Naive thymus-derived CD4-positive, alpha-beta T cell (primary cell): ENCODE measurements at regions of chr3 and their contacts with region 1.

Region 1: DNA sequence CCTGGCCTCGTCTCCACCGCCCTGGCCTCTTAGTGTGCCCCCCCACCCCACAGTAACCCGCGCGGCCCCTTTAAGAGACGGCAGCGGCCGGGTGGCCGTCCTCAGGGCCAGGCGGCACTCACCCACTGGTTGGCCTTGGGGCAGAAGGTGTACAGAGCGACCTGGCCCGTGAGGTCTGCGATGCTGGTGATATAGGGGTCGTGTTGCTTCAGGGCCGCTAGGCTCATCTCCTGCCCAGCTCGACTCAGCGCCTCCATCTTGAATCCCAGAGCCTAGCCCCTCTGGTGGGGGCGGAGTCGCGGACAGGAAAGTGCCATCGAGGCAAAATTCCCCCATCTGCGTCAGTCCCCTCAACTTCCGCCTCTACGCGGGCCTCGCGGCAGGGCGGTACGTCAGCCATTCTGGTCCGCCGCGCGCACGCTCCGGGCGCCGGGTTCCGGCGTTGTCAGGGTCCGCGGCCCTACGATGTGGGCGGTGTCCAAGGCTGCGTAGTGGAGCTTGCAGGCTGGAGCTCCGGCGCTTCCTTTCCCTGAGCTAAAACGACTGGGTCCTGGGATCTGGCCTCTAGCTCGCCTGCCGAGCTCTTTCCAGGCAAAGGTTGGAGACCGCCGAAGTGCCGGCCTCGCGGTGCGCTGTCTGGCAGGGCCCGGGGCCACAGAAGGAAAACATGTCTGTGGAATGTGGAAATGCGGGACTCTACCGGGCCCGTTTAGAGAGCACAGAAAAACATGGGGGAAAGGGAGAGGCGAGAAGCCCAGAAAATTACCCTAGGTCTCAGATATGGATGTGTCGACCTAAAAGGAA is at the start of gene DCP1A:
- DNase-seq: peak; percentile 93 to 98 (median 96)
- ATAC-seq: peak; percentile 96
- H3K4me3 ChIP-seq: peak within 1 kb of the TSS; percentile 93
- H3K4me3 Mint-ChIP-seq: peak within 1 kb of the TSS; percentile 96 to 99 (median 99)
- H3K27ac ChIP-seq: peak within 1 kb of the TSS; percentile 98
- H3K27ac Mint-ChIP-seq: peak within 1 kb of the TSS; percentile 98 to 100 (median 99)
- H3K4me1 ChIP-seq: peaks cover 6 to 21% of the 10 kb centered on the region in 2 donors
- H3K4me1 Mint-ChIP-seq: peaks cover 13 to 58% (median 42%) of the 10 kb centered on the region in 7 donors
- H3K27me3 ChIP-seq: no peaks in the 10 kb centered on the region
- H3K27me3 Mint-ChIP-seq: no peaks in the 10 kb centered on the region
- total RNA-seq, gene DCP1A: 34.0 to 51.3 (median 40.1) TPM

Region 2: DNA sequence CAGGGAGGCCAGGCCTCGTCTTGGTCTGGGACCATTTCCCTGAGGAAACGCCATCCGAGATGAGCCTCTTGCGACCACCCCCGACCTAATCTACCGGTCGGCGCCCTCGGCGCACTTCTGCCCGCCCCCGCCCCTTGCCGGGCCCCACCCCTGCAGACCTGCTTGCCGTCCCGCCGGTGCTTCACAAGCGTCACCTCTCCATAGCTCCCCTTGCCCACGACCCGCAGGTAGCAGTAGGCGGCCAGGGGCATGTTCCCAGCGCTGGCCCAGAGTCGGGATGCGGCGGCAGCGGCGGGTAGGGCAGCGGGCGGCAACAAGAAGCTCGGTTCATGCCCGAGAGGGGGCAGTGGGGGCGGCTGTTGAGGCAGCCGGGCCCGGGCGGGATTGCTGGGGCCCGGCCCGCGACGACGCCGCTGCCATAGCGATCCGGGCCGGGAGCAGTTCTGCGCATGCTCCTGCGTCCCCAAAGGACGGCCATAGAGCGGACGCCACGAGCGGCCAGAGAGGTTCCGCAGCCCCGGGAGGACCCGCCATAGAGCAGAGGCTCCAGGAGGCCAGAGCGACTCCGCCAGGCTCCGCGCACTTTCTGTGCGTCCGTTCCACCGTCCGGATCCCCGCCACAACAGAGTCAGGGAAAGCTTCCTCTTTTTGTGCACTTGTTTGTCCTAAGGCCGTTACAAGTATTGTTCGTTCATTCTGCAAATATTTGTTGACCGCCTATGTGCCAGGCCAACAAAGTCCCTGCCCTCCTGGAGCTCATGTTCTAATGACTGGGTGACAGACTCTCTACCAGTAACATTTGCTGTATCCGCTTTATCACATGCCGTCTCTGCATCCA is 576.7 kb before region 1 on chr3 and contains the start of gene NEK4:
- CTCF ChIA-PET with region 1: no interaction called
- POLR2A ChIA-PET with region 1: no interaction called
- intact Hi-C with region 1: loop called in 1 of 2 experiments (anchors 2 kb)
- DNase-seq: peak; percentile 44 to 86 (median 65)
- ATAC-seq: peak; percentile 89
- H3K4me3 ChIP-seq: peak within 1 kb of the TSS; percentile 83
- H3K4me3 Mint-ChIP-seq: peak within 1 kb of the TSS; percentile 83 to 99 (median 95)
- H3K27ac ChIP-seq: peak within 1 kb of the TSS; percentile 72
- H3K27ac Mint-ChIP-seq: peak within 1 kb of the TSS; percentile 89 to 97 (median 93)
- H3K4me1 ChIP-seq: peaks cover 5 to 16% of the 10 kb centered on the region in 2 donors
- H3K4me1 Mint-ChIP-seq: peaks cover 12 to 34% (median 23%) of the 10 kb centered on the region in 7 donors
- H3K27me3 ChIP-seq: no peaks in the 10 kb centered on the region
- H3K27me3 Mint-ChIP-seq: peaks cover 0 to 12% (median 0%) of the 10 kb centered on the region in 5 donors
- total RNA-seq, gene NEK4: 14.4 to 28.4 (median 21.1) TPM

Region 3: GRCh38 chr3:52897130-52898122 is 450.0 kb before region 1 on chr3 and contains the start of gene STIMATE:
- CTCF ChIA-PET with region 1: no interaction called
- POLR2A ChIA-PET with region 1: no interaction called
- intact Hi-C with region 1: loop called in 1 of 2 experiments (anchors 1 kb)
- DNase-seq: peak; percentile 77 to 89 (median 86)
- ATAC-seq: peak; percentile 97
- H3K4me3 ChIP-seq: peak within 1 kb of the TSS; percentile 85
- H3K4me3 Mint-ChIP-seq: peak within 1 kb of the TSS; percentile 90 to 99 (median 95)
- H3K27ac ChIP-seq: peak within 1 kb of the TSS; percentile 72
- H3K27ac Mint-ChIP-seq: peak within 1 kb of the TSS; percentile 44 to 97 (median 86)
- H3K4me1 ChIP-seq: peaks cover 16 to 23% of the 10 kb centered on the region in 2 donors
- H3K4me1 Mint-ChIP-seq: peaks cover 37 to 51% (median 45%) of the 10 kb centered on the region in 7 donors
- H3K27me3 ChIP-seq: no peaks in the 10 kb centered on the region
- H3K27me3 Mint-ChIP-seq: no peaks in the 10 kb centered on the region
- total RNA-seq, gene STIMATE: 21.1 to 44.9 (median 34.5) TPM

Region 4: DNA sequence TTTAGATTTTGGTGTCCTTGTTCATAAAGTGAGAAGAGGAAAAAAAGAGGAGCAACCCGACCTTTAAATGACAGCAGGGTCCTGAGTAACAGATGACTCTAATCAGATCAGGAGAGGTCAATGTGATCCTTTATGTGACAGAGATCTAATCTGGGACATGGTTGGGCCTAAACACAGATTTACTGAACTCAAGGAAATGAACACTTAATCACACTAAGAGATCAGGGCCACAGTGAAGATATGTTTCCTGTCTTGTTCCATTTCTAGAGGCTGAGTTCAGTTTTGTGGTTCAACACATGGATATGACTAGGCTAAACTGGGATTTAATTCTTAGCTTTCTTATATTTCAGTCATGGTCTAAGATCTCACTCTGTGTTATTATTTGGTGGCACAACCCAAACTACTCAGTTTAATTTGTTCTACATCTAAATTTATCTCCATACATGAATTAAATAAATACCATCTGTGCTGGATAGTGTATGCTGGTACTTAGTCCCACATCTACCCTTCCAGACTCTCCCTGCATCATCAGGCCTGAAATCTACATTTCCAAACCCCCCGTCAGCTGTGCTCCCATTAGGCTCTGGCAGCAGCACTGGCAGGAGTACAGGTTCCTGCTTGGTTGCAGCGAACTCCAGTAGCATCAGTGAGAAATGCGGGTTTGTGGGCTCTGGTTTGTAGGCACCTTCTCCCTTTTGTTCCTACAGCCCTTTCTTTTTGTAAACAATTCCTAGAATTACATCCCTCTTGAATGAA is 324.2 kb before region 1 on chr3:
- CTCF ChIA-PET with region 1: no interaction called
- POLR2A ChIA-PET with region 1: no interaction called
- intact Hi-C with region 1: no loop called
- DNase-seq: no peak
- ATAC-seq: no peak
- H3K4me3 ChIP-seq: no peak overlapping the region
- H3K4me3 Mint-ChIP-seq: peak overlapping the region in 7 of 10 donors; percentile 1 to 58 (median 21)
- H3K27ac ChIP-seq: no peak overlapping the region
- H3K27ac Mint-ChIP-seq: peak overlapping the region in 5 of 9 donors; percentile 32 to 83 (median 51)
- H3K4me1 ChIP-seq: peaks cover 11 to 20% of the 10 kb centered on the region in 2 donors
- H3K4me1 Mint-ChIP-seq: peaks cover 21 to 82% (median 69%) of the 10 kb centered on the region in 7 donors
- H3K27me3 ChIP-seq: no peaks in the 10 kb centered on the region
- H3K27me3 Mint-ChIP-seq: no peaks in the 10 kb centered on the region

Region 5: DNA sequence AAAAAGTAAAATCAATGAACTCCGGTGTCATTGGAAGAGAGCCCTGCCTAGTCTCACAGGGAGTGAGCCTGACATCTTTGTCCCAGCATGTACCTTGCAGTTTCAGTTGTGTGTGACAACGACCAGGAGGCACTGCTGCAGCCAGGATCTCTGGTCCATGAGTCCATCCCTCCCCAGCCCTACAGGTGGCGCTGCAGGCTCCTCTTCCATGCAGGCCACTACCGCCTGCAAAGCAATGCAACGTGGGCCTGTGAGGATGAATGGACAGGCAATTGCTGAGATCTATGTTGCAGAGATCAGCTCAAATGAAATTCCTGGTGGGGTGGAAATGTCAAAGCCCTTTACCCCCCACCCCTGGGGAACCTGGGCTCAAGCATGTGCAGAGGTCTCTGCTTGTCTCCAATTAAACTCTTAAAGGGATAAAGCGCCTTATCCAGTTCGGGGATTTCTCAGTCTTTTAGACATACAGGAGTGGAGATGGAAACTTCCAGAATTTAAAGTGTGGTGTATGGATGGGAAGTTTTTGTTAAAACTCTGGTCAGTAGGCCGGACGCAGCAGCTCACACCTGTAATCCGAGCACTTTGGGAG is 127.5 kb before region 1 on chr3:
- CTCF ChIA-PET with region 1: no interaction called
- POLR2A ChIA-PET with region 1: no interaction called
- intact Hi-C with region 1: loop called (anchors 1 kb)
- DNase-seq: peak; percentile 39 to 83 (median 66)
- ATAC-seq: peak; percentile 91
- H3K4me3 ChIP-seq: no peak overlapping the region
- H3K4me3 Mint-ChIP-seq: no peak overlapping the region
- H3K27ac ChIP-seq: no peak overlapping the region
- H3K27ac Mint-ChIP-seq: peak overlapping the region in 3 of 9 donors; percentile 7 to 19 (median 13)
- H3K4me1 ChIP-seq: no peaks in the 10 kb centered on the region
- H3K4me1 Mint-ChIP-seq: peaks cover 0 to 5% (median 3%) of the 10 kb centered on the region in 7 donors
- H3K27me3 ChIP-seq: no peaks in the 10 kb centered on the region
- H3K27me3 Mint-ChIP-seq: peaks cover 0 to 5% (median 0%) of the 10 kb centered on the region in 5 donors

Region 6: DNA sequence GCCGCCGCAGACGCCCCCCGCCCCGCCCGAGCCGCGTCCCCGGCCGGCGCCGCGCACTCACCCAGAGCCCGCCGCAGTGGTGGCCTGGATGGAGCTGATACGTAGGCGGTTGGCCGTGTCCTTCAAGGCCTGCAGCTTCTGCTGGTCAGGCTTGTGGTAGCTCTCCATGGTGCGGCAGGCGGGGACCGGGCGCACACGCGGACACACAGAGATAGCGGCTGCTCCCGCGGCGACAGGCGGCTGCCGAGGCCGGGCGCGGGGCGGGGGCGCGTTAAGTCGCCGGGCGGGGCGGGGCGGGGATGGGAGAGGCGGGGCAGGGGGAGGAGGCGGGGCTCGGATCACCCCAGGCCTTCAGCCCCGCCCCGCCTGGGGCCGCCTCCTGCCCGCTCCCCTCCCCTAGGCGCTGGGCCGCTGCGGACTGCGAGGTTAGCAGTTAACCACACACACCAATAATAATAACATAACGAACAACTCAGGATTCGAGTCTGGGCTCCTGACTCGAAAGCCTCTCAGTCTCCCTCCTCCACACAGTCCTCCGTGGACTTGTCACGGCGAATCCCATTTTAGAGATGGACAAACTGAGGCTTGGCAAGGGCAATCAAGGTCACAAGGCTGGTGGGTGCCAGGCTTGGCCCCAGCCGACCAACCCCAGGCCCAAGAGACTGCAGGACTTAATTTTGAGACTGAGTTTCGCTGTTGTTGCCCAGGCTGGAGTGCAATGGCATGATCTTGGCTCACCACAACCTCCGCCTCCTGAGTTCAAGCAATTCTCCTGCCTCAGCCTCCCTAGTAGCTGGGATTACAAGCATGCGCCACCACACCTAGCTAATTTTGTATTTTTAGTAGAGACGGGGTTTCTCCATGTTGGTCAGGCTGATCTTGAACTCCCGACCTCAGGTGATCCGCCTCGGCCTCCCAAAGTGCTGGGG is 91.4 kb before region 1 on chr3 and contains the start of gene TKT:
- CTCF ChIA-PET with region 1: no interaction called
- POLR2A ChIA-PET with region 1: interaction called, 7 read pairs
- intact Hi-C with region 1: loop called (anchors 1 kb)
- DNase-seq: peak; percentile 58 to 85 (median 67)
- ATAC-seq: peak; percentile 92
- H3K4me3 ChIP-seq: peak within 1 kb of the TSS; percentile 70
- H3K4me3 Mint-ChIP-seq: peak within 1 kb of the TSS; percentile 90 to 97 (median 92)
- H3K27ac ChIP-seq: peak within 1 kb of the TSS; percentile 76
- H3K27ac Mint-ChIP-seq: peak within 1 kb of the TSS; percentile 69 to 89 (median 84)
- H3K4me1 ChIP-seq: peaks cover 14% of the 10 kb centered on the region in 2 donors
- H3K4me1 Mint-ChIP-seq: peaks cover 19 to 39% (median 34%) of the 10 kb centered on the region in 7 donors
- H3K27me3 ChIP-seq: no peaks in the 10 kb centered on the region
- H3K27me3 Mint-ChIP-seq: peaks cover 0 to 4% (median 0%) of the 10 kb centered on the region in 5 donors
- total RNA-seq, gene TKT: 83.5 to 333 (median 121) TPM

Region 7: GRCh38 chr3:53303957-53304356 is 43.5 kb before region 1 on chr3:
- CTCF ChIA-PET with region 1: interaction called, 3 read pairs
- POLR2A ChIA-PET with region 1: interaction called, 3 read pairs
- intact Hi-C with region 1: loop called (anchors 1 kb)
- DNase-seq: no peak
- ATAC-seq: no peak
- H3K4me3 ChIP-seq: no peak overlapping the region
- H3K4me3 Mint-ChIP-seq: no peak overlapping the region
- H3K27ac ChIP-seq: no peak overlapping the region
- H3K27ac Mint-ChIP-seq: peak overlapping the region in 3 of 9 donors; percentile 16 to 74 (median 27)
- H3K4me1 ChIP-seq: no peaks in the 10 kb centered on the region
- H3K4me1 Mint-ChIP-seq: peaks cover 0 to 5% (median 0%) of the 10 kb centered on the region in 7 donors
- H3K27me3 ChIP-seq: no peaks in the 10 kb centered on the region
- H3K27me3 Mint-ChIP-seq: no peaks in the 10 kb centered on the region

Region 8: DNA sequence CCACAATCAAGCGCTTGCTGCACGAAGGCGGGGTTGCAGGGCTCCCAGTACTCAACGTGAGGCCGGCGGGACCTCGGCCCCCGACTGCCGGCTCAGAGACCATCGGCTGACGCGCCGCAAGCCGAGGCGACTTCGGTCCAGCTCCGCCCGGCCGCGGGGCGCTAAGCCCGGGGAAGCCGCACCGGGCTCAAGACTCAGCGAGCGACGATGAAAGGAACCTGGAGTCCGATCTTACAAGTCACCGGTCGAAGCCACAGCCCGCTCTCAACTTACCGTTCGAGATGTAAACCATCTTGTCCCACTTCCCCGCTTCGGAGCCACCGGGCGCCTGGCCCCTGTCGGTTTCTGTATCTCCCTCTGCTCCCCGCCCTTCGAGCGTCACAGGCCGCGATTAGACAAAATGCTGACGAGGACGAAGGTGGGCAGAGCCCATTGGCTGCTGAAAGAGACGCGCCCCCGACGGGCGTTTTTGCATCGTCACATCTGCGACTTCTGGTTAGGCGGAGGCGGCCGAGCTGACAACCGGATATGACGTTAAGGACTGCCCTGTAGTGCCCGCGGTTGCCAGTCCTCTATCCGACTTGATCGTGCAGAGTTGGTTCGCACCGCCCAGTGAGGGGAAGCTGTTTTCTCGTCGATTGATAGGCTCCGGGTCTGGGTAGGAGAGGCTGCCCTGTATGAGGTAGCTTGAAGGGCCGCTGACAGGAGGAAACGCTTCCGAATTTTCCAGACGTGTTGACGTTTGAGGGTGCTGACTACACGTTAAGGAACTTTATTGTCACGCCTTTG is 544.2 kb after region 1 on chr3 and contains the start of gene SELENOK:
- CTCF ChIA-PET with region 1: no interaction called
- POLR2A ChIA-PET with region 1: interaction called, 10 read pairs
- intact Hi-C with region 1: loop called (anchors 1 kb)
- DNase-seq: peak; percentile 84 to 98 (median 97)
- ATAC-seq: peak; percentile 97
- H3K4me3 ChIP-seq: peak within 1 kb of the TSS; percentile 81
- H3K4me3 Mint-ChIP-seq: peak within 1 kb of the TSS; percentile 89 to 98 (median 94)
- H3K27ac ChIP-seq: peak within 1 kb of the TSS; percentile 98
- H3K27ac Mint-ChIP-seq: peak within 1 kb of the TSS; percentile 97 to 99 (median 99)
- H3K4me1 ChIP-seq: peaks cover 12 to 36% of the 10 kb centered on the region in 2 donors
- H3K4me1 Mint-ChIP-seq: peaks cover 30 to 64% (median 60%) of the 10 kb centered on the region in 7 donors
- H3K27me3 ChIP-seq: no peaks in the 10 kb centered on the region
- H3K27me3 Mint-ChIP-seq: peaks cover 1 to 29% (median 17%) of the 10 kb centered on the region in 5 donors
- total RNA-seq, gene SELENOK: 33.6 to 104 (median 45.4) TPM